A673 (cell line): ENCODE measurements at regions of chr7 and their contacts with region 1.

Region 1: GRCh38 chr7:96075510-96076349 is 246.2 kb downstream of the SLC25A13 start:
- DNase-seq: peak; percentile 88
- H3K4me3 ChIP-seq: peak overlapping the region; percentile 61
- H3K27ac ChIP-seq: peak overlapping the region; percentile 54
- H3K4me1 ChIP-seq: peaks cover 27% of the 10 kb centered on the region
- H3K27me3 ChIP-seq: no peaks in the 10 kb centered on the region
- CTCF ChIP-seq: peak; percentile 95

Region 2: GRCh38 chr7:95723592-95724180 is 352.0 kb before region 1 on chr7:
- CTCF ChIA-PET with region 1: no interaction called
- POLR2A ChIA-PET with region 1: no interaction called
- intact Hi-C with region 1: loop called (anchors 5 kb)
- DNase-seq: peak; percentile 81
- H3K4me3 ChIP-seq: no peak overlapping the region
- H3K27ac ChIP-seq: no peak overlapping the region
- H3K4me1 ChIP-seq: peaks cover 10% of the 10 kb centered on the region
- H3K27me3 ChIP-seq: no peaks in the 10 kb centered on the region
- CTCF ChIP-seq: peak; percentile 70

Region 3: DNA sequence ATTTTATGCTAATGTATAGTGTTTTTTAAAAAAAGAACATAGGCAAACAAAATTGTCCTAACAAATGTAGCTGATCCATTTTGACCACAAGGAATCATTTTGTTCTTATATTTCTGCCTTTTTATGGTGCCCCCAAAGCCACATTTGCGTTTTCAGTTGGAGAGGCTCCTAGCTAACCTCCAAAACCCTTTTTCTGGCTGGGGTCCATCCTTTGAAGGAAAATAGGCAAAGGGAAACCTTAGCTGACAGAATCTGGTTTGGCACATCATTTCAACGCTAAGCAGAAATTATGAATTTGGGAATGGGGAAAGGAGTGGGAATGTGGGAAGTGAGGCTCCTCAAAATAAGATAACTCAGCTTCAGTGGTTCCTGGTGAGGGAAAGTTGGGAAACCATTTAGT is 271.7 kb after region 1 on chr7:
- CTCF ChIA-PET with region 1: interaction called, 11 read pairs
- POLR2A ChIA-PET with region 1: no interaction called
- intact Hi-C with region 1: no loop called
- DNase-seq: no peak
- H3K4me3 ChIP-seq: no peak overlapping the region
- H3K27ac ChIP-seq: no peak overlapping the region
- H3K4me1 ChIP-seq: no peaks in the 10 kb centered on the region
- H3K27me3 ChIP-seq: peaks cover under 1% of the 10 kb centered on the region
- CTCF ChIP-seq: no peak

Region 4: GRCh38 chr7:96414931-96415292 is 339.2 kb after region 1 on chr7:
- CTCF ChIA-PET with region 1: interaction called, 10 read pairs
- POLR2A ChIA-PET with region 1: no interaction called
- intact Hi-C with region 1: loop called (anchors 1 kb)
- DNase-seq: peak; percentile 80
- H3K4me3 ChIP-seq: no peak overlapping the region
- H3K27ac ChIP-seq: peak overlapping the region; percentile 44
- H3K4me1 ChIP-seq: peaks cover 29% of the 10 kb centered on the region
- H3K27me3 ChIP-seq: no peaks in the 10 kb centered on the region
- CTCF ChIP-seq: peak; percentile 85

Region 5: GRCh38 chr7:96739609-96740008 is 663.9 kb after region 1 on chr7:
- CTCF ChIA-PET with region 1: no interaction called
- POLR2A ChIA-PET with region 1: no interaction called
- intact Hi-C with region 1: loop called (anchors 2 kb)
- DNase-seq: peak; percentile 85
- H3K4me3 ChIP-seq: no peak overlapping the region
- H3K27ac ChIP-seq: peak overlapping the region; percentile 82
- H3K4me1 ChIP-seq: peaks cover 61% of the 10 kb centered on the region
- H3K27me3 ChIP-seq: no peaks in the 10 kb centered on the region
- CTCF ChIP-seq: no peak

Region 6: DNA sequence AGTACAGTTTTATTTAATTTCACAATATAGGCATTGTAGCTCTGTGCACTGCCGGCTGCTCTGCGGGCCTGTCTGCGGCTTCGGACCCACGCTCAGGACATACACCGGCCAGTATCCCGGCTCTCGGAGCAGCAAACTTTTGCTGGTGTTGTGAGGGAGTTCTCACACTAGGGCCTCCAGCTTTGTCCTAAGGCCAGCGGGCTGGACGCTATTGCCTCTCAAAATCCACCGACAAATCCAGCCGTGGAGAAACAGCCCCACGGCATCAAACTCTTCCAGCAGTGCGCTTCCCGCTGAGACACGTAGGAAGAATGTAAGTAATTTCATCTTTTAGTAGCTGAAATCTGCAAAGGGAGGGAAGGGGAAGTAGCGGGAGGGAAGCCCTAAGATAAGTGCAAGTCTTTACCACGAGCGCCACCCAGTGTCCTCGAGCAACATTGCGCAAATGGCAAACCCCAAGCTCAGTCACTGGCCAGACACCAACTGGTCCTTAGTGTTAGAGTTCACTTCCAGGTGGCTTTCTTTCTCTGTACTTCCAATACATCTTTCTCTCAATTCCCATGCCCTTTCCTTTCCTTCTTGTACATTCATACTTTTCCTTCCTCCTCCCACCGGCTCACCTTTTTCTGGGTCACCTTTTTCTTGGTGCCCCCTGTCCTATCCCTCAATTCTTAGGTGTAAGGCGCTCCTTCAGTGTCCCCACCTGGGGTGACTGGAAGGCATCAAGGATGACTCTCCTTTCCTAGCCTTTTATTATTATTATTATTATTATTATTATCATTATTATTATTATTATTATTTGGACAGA is 951.9 kb after region 1 on chr7:
- CTCF ChIA-PET with region 1: interaction called, 7 read pairs
- POLR2A ChIA-PET with region 1: no interaction called
- intact Hi-C with region 1: loop called (anchors 1 kb)
- DNase-seq: peak; percentile 91
- H3K4me3 ChIP-seq: peak overlapping the region; percentile 40
- H3K27ac ChIP-seq: peak overlapping the region; percentile 62
- H3K4me1 ChIP-seq: peaks cover 25% of the 10 kb centered on the region
- H3K27me3 ChIP-seq: peaks cover 3% of the 10 kb centered on the region
- CTCF ChIP-seq: peak; percentile 93